ENCODE measurements at regions of chr3 and their contacts with region 1.

Region 1: GRCh38 chr3:112531358-112531781 is 30.4 kb downstream of the ATG3 start:
- DNase-seq: no peak
- ATAC-seq: no peak
- H3K4me3 ChIP-seq: no peak overlapping the region
- H3K27ac ChIP-seq: no peak overlapping the region
- H3K4me1 ChIP-seq: no peaks in the 10 kb centered on the region
- H3K27me3 ChIP-seq: no peaks in the 10 kb centered on the region
- CTCF ChIP-seq: peak; percentile 50

Region 2: DNA sequence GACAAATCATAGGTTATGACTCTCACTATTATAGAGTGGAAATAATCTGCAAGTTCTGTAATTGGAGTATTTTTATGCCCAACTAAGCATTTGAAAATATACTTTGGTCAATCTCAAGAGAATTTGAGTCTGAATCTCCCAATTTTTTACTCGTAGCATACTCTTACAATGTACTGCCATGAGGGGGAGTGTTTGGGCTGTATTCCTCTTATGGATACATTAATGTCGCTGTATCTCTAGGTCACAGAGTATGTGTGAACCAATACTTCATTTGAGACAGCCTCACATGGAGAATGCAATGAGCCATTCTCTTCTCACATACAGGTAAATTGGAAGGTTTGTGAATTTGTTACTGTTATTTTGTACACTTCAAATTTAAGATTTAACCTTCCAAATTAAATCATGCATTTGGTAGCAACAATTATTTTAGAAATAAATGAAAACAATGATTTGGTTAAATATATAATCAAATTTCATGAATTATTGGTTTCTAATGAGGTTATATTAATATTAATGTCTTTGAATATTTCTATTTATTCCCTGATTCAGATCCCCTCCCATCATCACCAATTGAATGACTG is 203.9 kb before region 1 on chr3:
- intact Hi-C with region 1: loop called (anchors 10 kb)
- DNase-seq: no peak
- ATAC-seq: peak; percentile 92 to 93
- H3K4me3 ChIP-seq: no peak overlapping the region
- H3K27ac ChIP-seq: no peak overlapping the region
- H3K4me1 ChIP-seq: no peaks in the 10 kb centered on the region
- H3K27me3 ChIP-seq: no peaks in the 10 kb centered on the region
- CTCF ChIP-seq: peak; percentile 72

Region 3: GRCh38 chr3:112489674-112490479 is 41.5 kb before region 1 on chr3:
- intact Hi-C with region 1: no loop called
- DNase-seq: no peak
- ATAC-seq: no peak
- H3K4me3 ChIP-seq: no peak overlapping the region
- H3K27ac ChIP-seq: no peak overlapping the region
- H3K4me1 ChIP-seq: no peaks in the 10 kb centered on the region
- H3K27me3 ChIP-seq: no peaks in the 10 kb centered on the region
- CTCF ChIP-seq: no peak

Measured in lower lobe of right lung (tissue), 2 donors.